ENCODE measurements at regions of chr3 and their contacts with region 1.

Region 1: DNA sequence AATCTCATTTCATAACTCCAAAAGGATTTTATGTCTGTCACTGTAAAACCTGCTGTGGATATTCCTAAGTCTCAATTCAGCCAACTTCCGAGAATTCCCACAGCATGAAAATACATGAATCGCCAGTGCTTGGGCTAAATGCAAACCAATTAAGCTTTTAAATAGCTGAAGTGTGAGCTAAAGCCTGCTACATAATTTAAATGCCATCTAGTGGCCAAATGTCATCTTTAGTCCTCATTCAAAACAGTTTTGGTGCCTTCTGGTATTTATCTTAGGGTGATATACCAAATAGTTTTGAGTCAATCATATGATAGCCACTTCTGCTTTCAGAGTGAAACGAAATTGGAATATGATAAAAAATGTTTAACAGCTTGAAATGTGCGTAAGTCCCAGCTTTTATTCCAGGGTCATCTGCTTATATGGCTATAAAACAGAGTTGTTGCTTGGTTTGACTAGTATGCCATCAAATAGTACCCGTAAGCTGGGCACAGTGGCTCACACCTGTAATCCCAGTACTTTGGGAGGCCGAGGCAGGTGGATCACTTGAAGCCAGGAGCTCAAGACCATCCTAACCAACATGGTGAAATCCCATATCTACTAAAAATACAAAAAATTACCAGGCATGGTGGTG is 41.8 kb upstream of the CCNL1 start:
- DNase-seq: peak in 1 of 2 experiments; percentile 68
- H3K4me3 ChIP-seq: no peak overlapping the region
- H3K27ac ChIP-seq: no peak overlapping the region
- H3K4me1 ChIP-seq: no peaks in the 10 kb centered on the region
- H3K27me3 ChIP-seq: no peaks in the 10 kb centered on the region
- CTCF ChIP-seq: peak; percentile 71

Region 2: GRCh38 chr3:155995525-155996351 is 1206.0 kb before region 1 on chr3:
- CTCF ChIA-PET with region 1: interaction called, 3 read pairs
- POLR2A ChIA-PET with region 1: no interaction called
- intact Hi-C with region 1: loop called (anchors 5 kb)
- DNase-seq: peak in 1 of 2 experiments; percentile 54
- H3K4me3 ChIP-seq: no peak overlapping the region
- H3K27ac ChIP-seq: no peak overlapping the region
- H3K4me1 ChIP-seq: no peaks in the 10 kb centered on the region
- H3K27me3 ChIP-seq: no peaks in the 10 kb centered on the region
- CTCF ChIP-seq: peak; percentile 80

Region 3: DNA sequence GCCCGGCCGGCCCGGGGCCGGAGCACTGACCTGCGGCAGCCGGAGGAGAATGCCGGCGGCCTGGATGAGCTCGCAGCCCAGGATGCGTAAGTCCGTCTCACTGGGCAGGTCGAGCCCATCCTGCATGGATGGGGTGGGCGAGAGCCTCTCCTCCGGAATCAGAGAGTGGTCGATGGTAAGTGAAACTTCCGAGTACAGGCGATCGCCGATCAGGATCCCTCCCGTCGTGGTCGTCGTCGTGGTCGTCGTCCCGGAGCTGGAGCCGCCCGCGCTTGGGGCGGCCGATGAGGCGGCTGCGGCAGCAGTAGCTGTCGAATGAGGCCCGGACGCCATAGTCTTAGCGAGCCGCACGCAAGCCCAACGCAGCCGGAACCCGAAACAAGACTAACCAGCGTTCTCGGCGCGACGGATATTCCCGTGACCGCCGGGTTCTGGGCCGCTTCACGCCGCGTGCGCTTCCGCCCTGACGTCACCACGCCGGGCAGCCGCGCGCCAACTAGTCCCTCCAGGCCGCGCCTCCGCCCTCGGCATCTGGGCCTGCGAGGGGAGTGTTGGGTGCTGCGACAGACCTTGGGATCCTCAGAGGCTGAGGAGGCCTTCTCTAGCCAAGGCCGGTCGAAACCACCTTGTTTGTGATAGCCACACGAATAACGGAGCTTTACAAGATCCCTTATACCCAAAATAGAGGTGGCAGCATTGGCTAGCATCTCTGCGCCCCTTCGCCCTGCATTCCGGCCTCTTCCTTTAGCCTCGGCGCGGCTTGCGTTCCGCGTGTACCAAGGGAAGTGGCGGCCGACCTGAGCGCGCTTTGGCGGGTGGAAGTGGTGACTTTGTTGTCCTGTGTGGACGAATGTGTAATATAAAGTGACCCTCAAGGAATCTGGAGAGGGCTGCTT is 41.8 kb before region 1 on chr3 and contains the start of gene CCNL1:
- CTCF ChIA-PET with region 1: interaction called, 3 read pairs
- POLR2A ChIA-PET with region 1: interaction called, 3 read pairs
- intact Hi-C with region 1: loop called (anchors 1 kb)
- DNase-seq: peak; percentile 92 to 97
- H3K4me3 ChIP-seq: peak within 1 kb of the TSS; percentile 93
- H3K27ac ChIP-seq: peak within 1 kb of the TSS; percentile 100
- H3K4me1 ChIP-seq: peaks cover 50% of the 10 kb centered on the region
- H3K27me3 ChIP-seq: no peaks in the 10 kb centered on the region
- CTCF ChIP-seq: no peak
- total RNA-seq, gene CCNL1: 91.3 and 101 TPM in 2 replicates

Region 4: DNA sequence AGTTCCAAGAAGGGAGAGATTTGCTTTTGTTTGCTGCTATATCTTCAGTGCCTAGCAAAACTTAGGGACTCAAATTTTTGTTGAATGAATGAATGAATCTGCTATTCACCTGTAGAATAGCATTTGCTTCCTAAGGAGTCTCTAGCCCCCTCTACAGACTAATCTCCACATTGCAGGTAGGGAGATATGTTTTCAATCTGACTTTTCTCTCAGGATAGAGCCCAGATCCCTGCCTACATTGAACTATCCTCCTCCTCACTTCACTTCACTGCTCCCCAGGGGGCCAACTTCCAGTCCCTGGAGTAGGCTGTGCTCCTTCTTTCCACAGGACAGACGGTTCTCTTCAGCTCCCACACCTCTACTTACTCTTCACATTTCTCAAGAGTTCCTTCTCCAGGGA is 153.0 kb after region 1 on chr3:
- CTCF ChIA-PET with region 1: no interaction called
- POLR2A ChIA-PET with region 1: no interaction called
- intact Hi-C with region 1: loop called (anchors 10 kb)
- DNase-seq: no peak
- H3K4me3 ChIP-seq: no peak overlapping the region
- H3K27ac ChIP-seq: no peak overlapping the region
- H3K4me1 ChIP-seq: peaks cover 12% of the 10 kb centered on the region
- H3K27me3 ChIP-seq: no peaks in the 10 kb centered on the region
- CTCF ChIP-seq: peak; percentile 60

Region 5: GRCh38 chr3:157493627-157494550 is 292.1 kb after region 1 on chr3:
- CTCF ChIA-PET with region 1: interaction called, 4 read pairs
- POLR2A ChIA-PET with region 1: interaction called, 5 read pairs
- intact Hi-C with region 1: loop called (anchors 1 kb)
- DNase-seq: peak in 1 of 2 experiments; percentile 47
- H3K4me3 ChIP-seq: no peak overlapping the region
- H3K27ac ChIP-seq: no peak overlapping the region
- H3K4me1 ChIP-seq: peaks cover 10% of the 10 kb centered on the region
- H3K27me3 ChIP-seq: no peaks in the 10 kb centered on the region
- CTCF ChIP-seq: peak; percentile 86

Region 6: GRCh38 chr3:158539414-158540014 is 1337.8 kb after region 1 on chr3:
- CTCF ChIA-PET with region 1: no interaction called
- POLR2A ChIA-PET with region 1: no interaction called
- intact Hi-C with region 1: loop called (anchors 10 kb)
- DNase-seq: peak in 1 of 2 experiments; percentile 12
- H3K4me3 ChIP-seq: no peak overlapping the region
- H3K27ac ChIP-seq: no peak overlapping the region
- H3K4me1 ChIP-seq: no peaks in the 10 kb centered on the region
- H3K27me3 ChIP-seq: no peaks in the 10 kb centered on the region
- CTCF ChIP-seq: peak; percentile 78

Measured in PC-9 (cell line).